Activated B cell treated with CpG ODN at 0.5 μM for 24 hours (primary cell): ENCODE measurements at regions of chr7 and their contacts with region 1.

Region 1: GRCh38 chr7:99918959-99919813 is at the start of gene TRIM4:
- DNase-seq: peak; percentile 80
- ATAC-seq: peak; percentile 97
- H3K4me3 Mint-ChIP-seq: peak within 1 kb of the TSS; percentile 94
- H3K27ac Mint-ChIP-seq: peak within 1 kb of the TSS; percentile 93
- H3K4me1 Mint-ChIP-seq: peaks cover 49% of the 10 kb centered on the region
- H3K27me3 Mint-ChIP-seq: no peaks in the 10 kb centered on the region
- CTCF ChIP-seq: no peak
- total RNA-seq, gene TRIM4: 33.1 and 35.8 TPM in 2 replicates

Region 2: DNA sequence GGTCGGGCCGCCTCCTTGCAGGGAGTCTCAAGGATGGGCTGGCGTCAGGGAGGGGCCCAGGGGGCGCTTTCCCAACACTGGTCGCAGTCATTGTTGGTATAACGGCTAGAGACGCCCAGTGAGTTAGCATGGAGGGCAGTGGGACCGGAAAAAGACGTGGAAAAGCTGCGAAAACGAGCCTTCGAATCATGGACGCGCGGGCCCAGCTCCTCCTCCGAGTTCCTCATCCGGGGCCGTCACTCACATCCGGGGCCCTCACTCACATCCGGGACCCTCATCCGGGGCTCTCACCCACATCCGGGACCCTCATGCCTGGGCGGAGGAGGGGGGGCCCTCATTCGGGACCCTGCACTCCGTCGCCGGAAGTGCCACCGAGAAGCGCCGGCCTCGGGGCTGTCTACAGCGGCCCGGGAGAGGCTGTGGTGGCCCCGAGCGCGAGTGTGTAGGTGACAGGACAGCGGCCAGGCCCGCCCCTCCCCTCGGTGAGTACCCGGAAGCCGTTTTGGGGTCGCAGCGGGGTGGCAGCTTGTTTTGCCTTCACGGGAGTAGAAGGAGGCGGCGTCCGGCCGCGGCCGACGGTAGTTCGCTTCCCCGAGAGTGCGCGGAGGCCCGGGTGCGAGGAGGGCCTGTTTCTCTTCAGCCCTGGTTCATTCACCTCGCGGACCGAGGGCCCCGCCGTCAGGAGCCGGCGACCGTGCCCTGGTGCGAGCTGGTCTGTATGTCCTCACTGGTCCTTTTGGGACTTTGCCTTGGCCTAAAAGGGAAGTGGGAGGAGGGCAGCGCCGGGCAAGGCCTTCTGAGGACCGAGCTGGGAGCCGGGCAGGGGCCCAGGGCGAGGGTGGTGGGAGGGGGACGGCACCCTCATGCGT is 360.6 kb before region 1 on chr7 and contains the start of gene ZNF655:
- CTCF ChIA-PET with region 1: no interaction called
- POLR2A ChIA-PET with region 1: interaction called, 10 read pairs
- intact Hi-C with region 1: loop called (anchors 10 kb)
- DNase-seq: peak; percentile 85
- ATAC-seq: peak; percentile 79
- H3K4me3 Mint-ChIP-seq: peak within 1 kb of the TSS; percentile 97
- H3K27ac Mint-ChIP-seq: peak within 1 kb of the TSS; percentile 97
- H3K4me1 Mint-ChIP-seq: peaks cover 49% of the 10 kb centered on the region
- H3K27me3 Mint-ChIP-seq: no peaks in the 10 kb centered on the region
- CTCF ChIP-seq: no peak
- total RNA-seq, gene ZNF655: 98.5 and 116 TPM in 2 replicates

Region 3: GRCh38 chr7:99971242-99971641 is 52.1 kb after region 1 on chr7:
- CTCF ChIA-PET with region 1: no interaction called
- POLR2A ChIA-PET with region 1: no interaction called
- intact Hi-C with region 1: no loop called
- DNase-seq: no peak
- ATAC-seq: no peak
- H3K4me3 Mint-ChIP-seq: no peak overlapping the region
- H3K27ac Mint-ChIP-seq: no peak overlapping the region
- H3K4me1 Mint-ChIP-seq: no peaks in the 10 kb centered on the region
- H3K27me3 Mint-ChIP-seq: peaks cover 34% of the 10 kb centered on the region
- CTCF ChIP-seq: no peak

Region 4: DNA sequence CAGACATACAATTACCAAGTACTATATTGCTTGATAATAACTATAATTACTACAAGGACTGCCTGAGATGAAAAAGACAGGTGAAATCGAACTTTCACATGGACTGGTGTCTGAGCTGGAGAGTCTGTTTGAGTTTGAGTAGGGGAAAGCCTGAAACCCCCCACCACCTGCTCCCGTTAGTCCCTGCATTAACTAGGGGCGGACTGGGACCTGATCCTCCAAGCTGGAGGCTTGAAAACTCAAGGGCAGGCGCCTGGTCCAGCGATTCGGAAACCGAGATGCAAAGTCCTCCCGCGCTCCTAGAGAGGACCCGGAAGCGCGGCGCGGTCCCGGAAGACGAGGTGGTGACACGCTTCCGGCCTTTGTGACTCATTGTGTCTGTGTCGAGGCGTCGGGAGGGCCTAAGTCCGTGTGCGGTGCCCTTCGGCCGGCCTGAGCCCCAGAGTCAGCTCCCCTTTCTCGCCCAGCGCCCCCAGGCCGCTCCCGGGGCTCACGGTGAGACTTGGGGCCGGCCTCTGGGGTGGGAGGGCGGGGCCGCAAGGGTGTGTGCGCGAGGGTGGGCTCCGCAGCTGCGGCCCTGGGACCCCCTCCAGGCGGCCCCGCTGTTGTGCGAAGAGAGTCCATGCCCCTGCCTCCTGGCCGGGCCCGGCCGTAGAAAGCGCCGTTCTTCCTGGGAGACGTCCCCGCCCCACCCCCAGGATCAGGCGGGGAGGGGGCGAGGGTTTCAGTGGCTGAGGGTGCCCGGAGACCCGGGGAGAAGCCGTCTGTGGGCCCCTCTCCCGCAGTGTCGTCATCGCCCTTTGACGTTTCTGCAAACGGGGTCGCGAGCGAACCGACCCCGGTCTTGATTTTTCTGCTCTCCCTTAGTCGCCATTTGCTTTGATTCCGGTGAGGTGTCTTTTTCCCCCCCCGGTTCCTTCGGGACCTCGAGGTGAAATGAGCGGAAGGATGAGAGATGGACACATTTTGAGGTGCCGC is 96.3 kb after region 1 on chr7 and contains the start of gene ZKSCAN1:
- CTCF ChIA-PET with region 1: no interaction called
- POLR2A ChIA-PET with region 1: interaction called, 11 read pairs
- intact Hi-C with region 1: loop called (anchors 1 kb)
- DNase-seq: peak; percentile 76
- ATAC-seq: peak; percentile 97
- H3K4me3 Mint-ChIP-seq: peak within 1 kb of the TSS; percentile 90
- H3K27ac Mint-ChIP-seq: peak within 1 kb of the TSS; percentile 84
- H3K4me1 Mint-ChIP-seq: peaks cover 34% of the 10 kb centered on the region
- H3K27me3 Mint-ChIP-seq: peaks cover 6% of the 10 kb centered on the region
- CTCF ChIP-seq: no peak
- total RNA-seq, gene ZKSCAN1: 59.0 and 70.6 TPM in 2 replicates

Region 5: GRCh38 chr7:100126931-100127865 is 208.0 kb after region 1 on chr7 and contains the start of gene MBLAC1:
- CTCF ChIA-PET with region 1: interaction called, 3 read pairs
- POLR2A ChIA-PET with region 1: no interaction called
- intact Hi-C with region 1: loop called (anchors 2 kb)
- DNase-seq: peak; percentile 81
- ATAC-seq: peak; percentile 85
- H3K4me3 Mint-ChIP-seq: peak within 1 kb of the TSS; percentile 100
- H3K27ac Mint-ChIP-seq: peak within 1 kb of the TSS; percentile 100
- H3K4me1 Mint-ChIP-seq: peaks cover 41% of the 10 kb centered on the region
- H3K27me3 Mint-ChIP-seq: no peaks in the 10 kb centered on the region
- CTCF ChIP-seq: no peak
- total RNA-seq, gene MBLAC1: 1.9 and 2.2 TPM in 2 replicates

Region 6: GRCh38 chr7:100456558-100456957 is 537.4 kb after region 1 on chr7:
- CTCF ChIA-PET with region 1: no interaction called
- POLR2A ChIA-PET with region 1: no interaction called
- intact Hi-C with region 1: loop called (anchors 10 kb)
- DNase-seq: no peak
- ATAC-seq: no peak
- H3K4me3 Mint-ChIP-seq: no peak overlapping the region
- H3K27ac Mint-ChIP-seq: no peak overlapping the region
- H3K4me1 Mint-ChIP-seq: peaks cover 3% of the 10 kb centered on the region
- H3K27me3 Mint-ChIP-seq: no peaks in the 10 kb centered on the region
- CTCF ChIP-seq: no peak